ENCODE measurements at regions of chr6 and their contacts with region 1.

Region 1: DNA sequence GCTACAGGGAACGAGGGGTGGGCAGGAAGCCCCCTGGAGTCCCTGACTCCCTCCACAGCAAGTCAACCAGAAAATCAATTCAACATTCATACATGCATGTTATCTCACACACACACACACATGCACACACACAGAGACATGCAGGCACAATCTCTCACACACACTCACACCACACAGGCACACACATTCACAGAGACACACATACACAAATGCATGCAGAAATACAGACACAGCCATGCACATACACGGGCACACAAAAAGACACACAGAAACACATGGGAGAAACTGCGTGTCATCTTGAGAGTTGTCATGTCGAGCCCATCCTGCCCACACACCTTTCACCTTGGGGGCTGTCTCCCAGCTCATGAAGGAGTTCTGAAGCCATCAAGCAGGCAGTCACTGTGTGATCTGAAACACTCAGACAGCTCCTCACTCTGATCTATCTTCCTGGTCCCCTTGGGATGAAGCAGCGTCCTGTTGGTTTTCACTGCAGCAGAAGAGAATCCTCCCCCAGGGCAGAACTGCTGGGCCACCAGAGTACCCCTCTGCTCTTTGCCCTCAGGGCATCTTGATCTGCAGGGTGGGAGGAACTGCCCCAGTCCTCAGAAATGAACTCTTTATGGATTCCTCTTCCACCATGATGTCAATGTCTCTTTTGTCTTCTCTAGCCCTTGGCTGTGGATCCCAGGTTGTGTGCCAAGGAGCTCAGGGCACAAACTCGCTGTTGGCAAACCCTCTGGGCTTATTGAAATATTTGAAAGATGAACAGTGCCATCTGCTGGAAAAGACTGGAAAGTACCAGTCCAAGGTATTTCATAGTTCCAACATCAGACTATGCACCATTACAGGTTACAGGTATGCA is 8.8 kb downstream of the RAET1L start:
- DNase-seq: peak in 30 of 35 experiments; percentile 15 to 84 (median 36)
- ATAC-seq: peak; percentile 78 to 85 (median 83)
- H3K4me3 ChIP-seq: no peak overlapping the region
- H3K4me3 Mint-ChIP-seq: no peak overlapping the region
- H3K27ac ChIP-seq: no peak overlapping the region
- H3K27ac Mint-ChIP-seq: peak overlapping the region in 1 of 2 donors; percentile 40
- H3K4me1 ChIP-seq: peaks cover 0 to 12% of the 10 kb centered on the region in 2 experiments
- H3K4me1 Mint-ChIP-seq: peaks cover 9 to 24% (median 18%) of the 10 kb centered on the region in 3 donors
- H3K27me3 ChIP-seq: peaks cover 16 to 41% of the 10 kb centered on the region in 2 experiments
- H3K27me3 Mint-ChIP-seq: peaks cover 64 to 72% of the 10 kb centered on the region in 2 donors

Region 2: GRCh38 chr6:149934249-149935156 is 82.1 kb before region 1 on chr6:
- CTCF ChIA-PET with region 1: interaction called in 1 of 2 experiments, 16 read pairs
- POLR2A ChIA-PET with region 1: interaction called, 7 to 8 read pairs
- DNase-seq: peak; percentile 29 to 87 (median 59)
- ATAC-seq: peak; percentile 31 to 66 (median 52)
- H3K4me3 ChIP-seq: no peak overlapping the region
- H3K4me3 Mint-ChIP-seq: no peak overlapping the region
- H3K27ac ChIP-seq: no peak overlapping the region
- H3K27ac Mint-ChIP-seq: no peak overlapping the region
- H3K4me1 ChIP-seq: peaks cover 0 to 23% of the 10 kb centered on the region in 2 experiments
- H3K4me1 Mint-ChIP-seq: peaks cover 15 to 21% (median 17%) of the 10 kb centered on the region in 3 donors
- H3K27me3 ChIP-seq: peaks cover 20 to 62% of the 10 kb centered on the region in 2 experiments
- H3K27me3 Mint-ChIP-seq: peaks cover 79 to 91% of the 10 kb centered on the region in 2 donors

Region 3: DNA sequence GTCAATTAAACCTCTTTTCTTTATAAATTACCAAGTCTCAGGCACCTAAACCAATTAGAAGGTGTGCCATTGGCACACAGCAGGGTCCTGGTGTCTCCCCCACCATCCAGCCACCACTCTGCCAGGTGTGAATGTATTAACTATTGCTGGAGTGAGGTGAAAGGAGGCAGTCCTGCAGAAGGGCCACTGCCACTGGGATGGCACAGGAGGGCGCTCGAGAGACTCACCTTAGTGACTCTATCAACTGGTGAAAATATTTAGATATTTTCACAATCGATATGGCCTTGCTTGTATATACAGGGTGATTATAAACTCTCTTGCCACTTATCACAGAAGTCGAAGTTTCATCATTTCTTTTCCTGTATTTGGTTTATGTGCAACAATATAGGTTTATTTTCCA is 1645.4 kb after region 1 on chr6:
- CTCF ChIA-PET with region 1: no interaction called
- POLR2A ChIA-PET with region 1: no interaction called
- DNase-seq: no peak
- ATAC-seq: no peak
- H3K4me3 ChIP-seq: no peak overlapping the region
- H3K4me3 Mint-ChIP-seq: no peak overlapping the region
- H3K27ac ChIP-seq: no peak overlapping the region
- H3K27ac Mint-ChIP-seq: no peak overlapping the region
- H3K4me1 ChIP-seq: no peaks in the 10 kb centered on the region
- H3K4me1 Mint-ChIP-seq: no peaks in the 10 kb centered on the region
- H3K27me3 ChIP-seq: no peaks in the 10 kb centered on the region
- H3K27me3 Mint-ChIP-seq: peaks cover 0 to 7% of the 10 kb centered on the region in 2 donors